B cell (primary cell): ENCODE measurements at regions of chr11 and their contacts with region 1.

Region 1: DNA sequence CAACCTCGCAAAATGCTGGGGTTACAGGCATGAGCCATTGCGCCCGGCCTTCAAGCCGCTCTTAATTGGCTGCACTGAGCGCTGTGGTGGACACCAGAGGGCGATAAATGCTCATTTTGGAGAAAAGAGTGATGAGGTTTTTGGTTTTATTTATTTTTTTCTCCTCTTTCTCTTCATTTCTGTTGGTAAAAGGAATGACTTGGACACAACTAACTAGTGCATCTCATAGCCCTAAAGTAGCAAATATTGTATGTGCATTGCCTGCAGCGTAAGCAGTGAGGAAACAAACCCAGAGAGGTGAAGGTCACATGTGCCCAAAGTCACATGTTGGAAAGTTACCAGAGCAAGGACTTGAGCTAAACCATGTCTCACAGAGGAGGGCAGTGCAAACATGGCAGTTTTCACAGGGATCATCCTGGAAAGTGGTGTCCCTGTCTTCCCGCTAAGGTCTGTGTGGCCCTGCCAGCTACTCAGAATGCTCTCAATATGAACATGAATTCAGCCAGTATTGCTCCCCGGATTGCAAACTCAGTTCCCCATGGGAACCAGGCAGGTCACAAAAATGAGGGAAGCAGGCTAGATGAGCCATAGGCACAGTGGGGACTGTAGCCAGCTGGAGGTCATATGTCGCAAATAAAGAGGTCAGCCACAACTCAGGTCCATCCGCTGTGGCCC is 8.6 kb upstream of the CD82 start:
- DNase-seq: peak; percentile 81
- ATAC-seq: peak; percentile 57
- H3K4me3 ChIP-seq: no peak overlapping the region
- H3K4me3 Mint-ChIP-seq: peak overlapping the region; percentile 48
- H3K27ac ChIP-seq: peak overlapping the region; percentile 61 to 82
- H3K27ac Mint-ChIP-seq: peak overlapping the region; percentile 86
- H3K4me1 ChIP-seq: peaks cover 52 to 67% of the 10 kb centered on the region in 2 donors
- H3K4me1 Mint-ChIP-seq: peaks cover 60% of the 10 kb centered on the region
- H3K27me3 ChIP-seq: no peaks in the 10 kb centered on the region
- H3K27me3 Mint-ChIP-seq: no peaks in the 10 kb centered on the region
- CTCF ChIP-seq: peak; percentile 78

Region 2: GRCh38 chr11:44029977-44030911 is 526.6 kb before region 1 on chr11:
- CTCF ChIA-PET with region 1: no interaction called
- POLR2A ChIA-PET with region 1: no interaction called
- intact Hi-C with region 1: no loop called
- DNase-seq: no peak
- ATAC-seq: no peak
- H3K4me3 ChIP-seq: no peak overlapping the region
- H3K4me3 Mint-ChIP-seq: no peak overlapping the region
- H3K27ac ChIP-seq: no peak overlapping the region
- H3K27ac Mint-ChIP-seq: no peak overlapping the region
- H3K4me1 ChIP-seq: no peaks in the 10 kb centered on the region
- H3K4me1 Mint-ChIP-seq: no peaks in the 10 kb centered on the region
- H3K27me3 ChIP-seq: peaks cover 0 to 16% (median 3%) of the 10 kb centered on the region in 4 experiments
- H3K27me3 Mint-ChIP-seq: peaks cover 49% of the 10 kb centered on the region
- CTCF ChIP-seq: no peak

Region 3: GRCh38 chr11:44351898-44352498 is 204.9 kb before region 1 on chr11:
- CTCF ChIA-PET with region 1: no interaction called
- POLR2A ChIA-PET with region 1: no interaction called
- intact Hi-C with region 1: no loop called
- DNase-seq: no peak
- ATAC-seq: no peak
- H3K4me3 ChIP-seq: peak overlapping the region in 1 of 5 experiments; percentile 32
- H3K4me3 Mint-ChIP-seq: no peak overlapping the region
- H3K27ac ChIP-seq: no peak overlapping the region
- H3K27ac Mint-ChIP-seq: no peak overlapping the region
- H3K4me1 ChIP-seq: peaks cover 20 to 28% of the 10 kb centered on the region in 2 donors
- H3K4me1 Mint-ChIP-seq: peaks cover 35% of the 10 kb centered on the region
- H3K27me3 ChIP-seq: peaks cover 0 to 4% (median 0%) of the 10 kb centered on the region in 4 experiments
- H3K27me3 Mint-ChIP-seq: peaks cover 18% of the 10 kb centered on the region
- CTCF ChIP-seq: no peak

Region 4: DNA sequence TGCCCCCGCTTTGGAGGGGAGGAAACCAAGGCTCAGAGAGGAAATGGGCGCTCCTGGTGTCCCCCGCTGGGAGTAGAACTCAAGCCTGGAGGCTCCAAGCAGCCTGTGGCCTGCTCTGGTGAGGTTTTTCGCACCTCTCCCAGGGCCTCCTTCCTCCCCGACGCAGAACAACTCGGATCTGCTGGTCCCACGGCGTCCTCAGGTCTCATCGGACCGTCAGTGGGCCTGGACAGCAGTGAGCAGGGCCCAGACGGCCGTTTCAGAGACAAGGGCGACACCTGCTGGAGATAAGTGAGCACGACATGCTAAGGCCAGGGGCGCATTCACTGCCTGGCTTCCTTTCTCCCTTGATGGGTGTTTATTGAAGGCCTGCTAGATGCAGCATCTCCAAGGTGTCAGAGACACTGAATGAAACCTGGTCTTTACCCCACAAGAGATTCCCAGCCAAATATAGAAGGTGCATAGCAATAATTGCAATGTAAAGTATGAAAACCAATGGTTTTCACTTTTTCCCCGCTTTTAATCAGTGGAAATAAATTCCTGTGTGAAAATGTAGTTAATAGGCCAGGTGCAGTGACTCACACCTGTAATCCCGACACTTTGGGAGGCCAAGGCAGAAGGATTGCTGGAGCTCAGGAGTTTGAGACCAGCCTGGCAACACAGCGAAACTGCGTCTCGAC is 18.4 kb before region 1 on chr11:
- CTCF ChIA-PET with region 1: interaction called, 24 read pairs
- POLR2A ChIA-PET with region 1: no interaction called
- intact Hi-C with region 1: no loop called
- DNase-seq: peak; percentile 81
- ATAC-seq: peak; percentile 93
- H3K4me3 ChIP-seq: no peak overlapping the region
- H3K4me3 Mint-ChIP-seq: no peak overlapping the region
- H3K27ac ChIP-seq: no peak overlapping the region
- H3K27ac Mint-ChIP-seq: no peak overlapping the region
- H3K4me1 ChIP-seq: peaks cover 0 to 6% of the 10 kb centered on the region in 2 donors
- H3K4me1 Mint-ChIP-seq: peaks cover 5% of the 10 kb centered on the region
- H3K27me3 ChIP-seq: peaks cover 0 to 16% (median 2%) of the 10 kb centered on the region in 4 experiments
- H3K27me3 Mint-ChIP-seq: peaks cover 17% of the 10 kb centered on the region
- CTCF ChIP-seq: peak; percentile 100

Region 5: DNA sequence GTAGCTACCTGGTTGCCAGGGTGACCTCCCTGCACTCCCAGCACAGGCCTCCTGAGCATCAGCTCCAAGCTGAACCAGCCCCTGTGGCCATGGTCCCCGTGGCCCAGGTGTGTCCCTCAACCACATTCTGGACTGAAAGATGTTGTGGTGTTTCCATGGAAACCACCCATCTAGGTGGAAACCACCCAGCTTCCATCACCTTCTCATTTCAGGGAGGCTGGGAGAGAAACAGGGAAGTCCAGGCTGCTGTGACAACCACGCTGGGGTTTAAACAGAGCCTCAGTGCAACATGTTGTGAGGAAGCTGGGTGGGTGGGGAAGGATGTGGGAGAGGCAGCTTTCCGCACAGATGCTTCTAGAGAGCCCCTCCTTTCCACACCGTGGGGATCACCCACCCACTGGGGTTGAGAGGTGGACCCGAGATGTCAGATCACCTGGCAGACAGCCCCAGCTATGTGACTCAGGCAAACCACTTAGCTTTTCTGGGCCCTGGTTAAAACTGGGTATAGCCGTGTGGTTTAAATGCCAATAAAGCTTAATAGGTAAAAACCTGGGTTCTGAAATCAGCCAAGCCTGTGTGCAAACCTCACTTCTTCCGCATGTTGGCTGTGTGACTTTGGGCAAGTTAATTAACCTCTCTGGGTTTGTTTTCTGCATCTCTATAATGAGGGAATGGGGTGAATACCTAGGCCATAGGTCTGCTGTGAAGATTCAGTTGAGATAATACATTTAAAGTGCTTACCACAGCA is 55.0 kb after region 1 on chr11:
- CTCF ChIA-PET with region 1: interaction called, 816 read pairs
- POLR2A ChIA-PET with region 1: interaction called, 31 read pairs
- intact Hi-C with region 1: loop called (anchors 1 kb)
- DNase-seq: peak; percentile 94
- ATAC-seq: peak; percentile 51
- H3K4me3 ChIP-seq: peak overlapping the region in 2 of 5 experiments; percentile 2 to 40
- H3K4me3 Mint-ChIP-seq: peak overlapping the region; percentile 59
- H3K27ac ChIP-seq: peak overlapping the region; percentile 97 to 99
- H3K27ac Mint-ChIP-seq: peak overlapping the region; percentile 96
- H3K4me1 ChIP-seq: peaks cover 97 to 100% of the 10 kb centered on the region in 2 donors
- H3K4me1 Mint-ChIP-seq: peaks cover 97% of the 10 kb centered on the region
- H3K27me3 ChIP-seq: no peaks in the 10 kb centered on the region
- H3K27me3 Mint-ChIP-seq: no peaks in the 10 kb centered on the region
- CTCF ChIP-seq: no peak

Region 6: GRCh38 chr11:44634401-44635281 is 77.8 kb after region 1 on chr11:
- CTCF ChIA-PET with region 1: interaction called, 816 read pairs
- POLR2A ChIA-PET with region 1: no interaction called
- intact Hi-C with region 1: no loop called
- DNase-seq: no peak
- ATAC-seq: no peak
- H3K4me3 ChIP-seq: no peak overlapping the region
- H3K4me3 Mint-ChIP-seq: no peak overlapping the region
- H3K27ac ChIP-seq: no peak overlapping the region
- H3K27ac Mint-ChIP-seq: no peak overlapping the region
- H3K4me1 ChIP-seq: peaks cover 0 to 6% of the 10 kb centered on the region in 2 donors
- H3K4me1 Mint-ChIP-seq: peaks cover 7% of the 10 kb centered on the region
- H3K27me3 ChIP-seq: peaks cover 0 to 17% (median 4%) of the 10 kb centered on the region in 4 experiments
- H3K27me3 Mint-ChIP-seq: peaks cover 21% of the 10 kb centered on the region
- CTCF ChIP-seq: no peak

Region 7: DNA sequence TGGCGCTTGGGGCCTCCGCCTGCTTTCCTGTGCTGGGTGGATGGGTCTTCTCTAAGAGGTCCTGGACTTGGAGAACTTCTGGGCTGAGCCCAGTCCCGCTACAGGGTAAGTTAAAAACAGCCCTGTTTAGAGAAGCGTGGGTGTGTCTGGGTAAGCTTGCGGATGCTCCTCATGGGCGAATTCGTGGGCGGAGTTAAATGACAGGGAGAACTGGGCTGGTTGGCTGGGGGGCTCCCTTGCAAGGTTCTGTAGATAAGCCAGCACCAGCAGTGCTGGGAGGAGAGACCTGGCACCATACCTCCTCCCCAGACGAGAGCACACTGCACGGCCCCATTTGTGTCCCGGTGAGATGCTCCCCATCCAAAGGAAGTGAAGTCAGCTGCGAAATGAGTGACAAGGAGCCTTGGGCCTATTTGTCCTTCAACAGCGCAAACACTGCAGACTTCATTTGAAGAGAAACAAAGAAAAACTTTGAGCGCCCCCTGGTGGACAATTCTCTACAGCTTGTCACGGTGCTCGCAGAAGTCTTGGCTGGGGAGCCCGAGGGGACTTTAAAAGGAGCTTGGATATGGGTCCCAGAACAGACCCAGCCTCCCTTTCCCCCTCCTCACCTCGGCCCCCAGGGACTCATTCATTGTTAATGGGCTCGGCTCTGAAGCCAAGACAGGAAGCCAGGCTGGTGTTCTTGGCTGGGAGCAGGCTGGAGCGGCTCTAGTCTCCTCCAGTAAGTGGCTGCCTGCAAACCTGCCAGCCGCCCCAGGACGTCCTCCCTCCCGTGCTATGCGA is 354.4 kb after region 1 on chr11:
- CTCF ChIA-PET with region 1: interaction called, 33 read pairs
- POLR2A ChIA-PET with region 1: no interaction called
- intact Hi-C with region 1: loop called (anchors 1 kb)
- DNase-seq: peak; percentile 85
- ATAC-seq: peak; percentile 69
- H3K4me3 ChIP-seq: no peak overlapping the region
- H3K4me3 Mint-ChIP-seq: no peak overlapping the region
- H3K27ac ChIP-seq: no peak overlapping the region
- H3K27ac Mint-ChIP-seq: no peak overlapping the region
- H3K4me1 ChIP-seq: peaks cover 23 to 31% of the 10 kb centered on the region in 2 donors
- H3K4me1 Mint-ChIP-seq: peaks cover 24% of the 10 kb centered on the region
- H3K27me3 ChIP-seq: peaks cover 0 to 5% (median 0%) of the 10 kb centered on the region in 4 experiments
- H3K27me3 Mint-ChIP-seq: peaks cover 4% of the 10 kb centered on the region
- CTCF ChIP-seq: peak; percentile 82

Region 8: GRCh38 chr11:44977476-44977984 is 420.7 kb after region 1 on chr11:
- CTCF ChIA-PET with region 1: no interaction called
- POLR2A ChIA-PET with region 1: no interaction called
- intact Hi-C with region 1: no loop called
- DNase-seq: no peak
- ATAC-seq: peak; percentile 35
- H3K4me3 ChIP-seq: no peak overlapping the region
- H3K4me3 Mint-ChIP-seq: peak overlapping the region; percentile 40
- H3K27ac ChIP-seq: no peak overlapping the region
- H3K27ac Mint-ChIP-seq: no peak overlapping the region
- H3K4me1 ChIP-seq: peaks cover 12 to 21% of the 10 kb centered on the region in 2 donors
- H3K4me1 Mint-ChIP-seq: peaks cover 11% of the 10 kb centered on the region
- H3K27me3 ChIP-seq: peaks cover 0 to 13% (median 2%) of the 10 kb centered on the region in 4 experiments
- H3K27me3 Mint-ChIP-seq: no peaks in the 10 kb centered on the region
- CTCF ChIP-seq: no peak